ENCODE measurements at regions of chr6 and their contacts with region 1.

Region 1: DNA sequence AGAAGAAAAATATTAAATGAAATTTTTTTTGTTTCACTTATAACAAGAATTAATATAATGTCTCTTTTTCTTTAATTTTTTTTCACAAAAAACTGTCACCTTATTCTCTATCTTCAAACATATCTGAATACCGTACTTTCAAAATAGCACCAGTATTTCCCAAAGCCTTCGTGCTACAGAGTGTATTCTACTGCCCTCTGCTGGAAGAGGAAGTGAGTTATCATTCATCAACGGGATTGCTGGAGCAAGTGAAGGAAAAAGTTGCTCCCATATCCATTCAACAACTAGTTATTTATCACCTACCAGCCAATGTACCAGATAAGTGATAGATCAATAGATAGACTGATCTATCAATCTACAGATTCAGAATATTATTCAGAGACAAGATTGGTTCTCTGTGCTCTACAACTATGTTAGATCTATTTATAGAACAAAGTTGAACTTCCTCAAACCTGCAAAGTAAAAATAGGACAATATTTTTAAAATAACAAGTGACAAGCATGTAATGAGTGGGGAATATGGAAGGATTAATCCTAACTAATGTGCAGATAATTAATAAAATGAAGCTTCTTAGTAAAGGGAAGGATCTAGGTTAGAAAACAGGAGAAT is 26.7 kb upstream of the TFAP2B start:
- DNase-seq: no peak
- ATAC-seq: peak; percentile 78
- H3K4me3 ChIP-seq: no peak overlapping the region
- H3K27ac ChIP-seq: no peak overlapping the region
- H3K4me1 ChIP-seq: no peaks in the 10 kb centered on the region
- H3K27me3 ChIP-seq: no peaks in the 10 kb centered on the region
- CTCF ChIP-seq: peak; percentile 63 to 80 (median 76)
- EP300 ChIP-seq: no peak
- POLR2A ChIP-seq: no peak
- RAD21 ChIP-seq: peak; percentile 72

Region 2: DNA sequence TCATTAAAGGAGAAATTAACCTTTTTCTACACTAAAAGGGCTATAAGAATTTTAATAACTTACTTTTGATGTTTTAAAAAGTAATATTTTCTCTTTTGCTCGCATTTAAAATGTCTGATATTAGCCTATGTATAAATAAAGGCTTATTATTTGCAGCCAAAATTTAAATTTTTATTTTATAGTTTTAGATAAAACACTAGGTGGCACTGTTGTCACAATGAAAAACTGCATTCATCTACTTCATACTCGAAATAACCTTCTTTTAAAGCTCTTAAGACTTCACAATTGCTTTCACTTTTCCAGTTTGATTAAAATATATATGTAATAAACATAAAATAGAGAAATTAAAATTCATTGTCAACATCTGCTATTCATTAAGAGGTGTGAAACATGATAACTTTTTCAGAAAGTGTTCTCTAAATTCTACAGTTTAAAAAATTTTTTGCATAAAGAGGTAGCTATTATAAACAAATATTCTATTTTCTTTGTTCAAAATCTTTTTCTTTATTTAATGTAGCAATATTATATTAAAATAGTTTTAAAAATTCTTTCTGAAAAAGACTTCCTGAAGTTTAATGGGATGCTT is 663.5 kb before region 1 on chr6:
- CTCF ChIA-PET with region 1: no interaction called
- POLR2A ChIA-PET with region 1: no interaction called
- RAD21 ChIA-PET with region 1: no interaction called
- SMC1A ChIA-PET with region 1: no interaction called
- in situ Hi-C with region 1: loop called (anchors 10 kb)
- intact Hi-C with region 1: loop called (anchors 5 kb)
- DNase-seq: no peak
- ATAC-seq: no peak
- H3K4me3 ChIP-seq: no peak overlapping the region
- H3K27ac ChIP-seq: no peak overlapping the region
- H3K4me1 ChIP-seq: no peaks in the 10 kb centered on the region
- H3K27me3 ChIP-seq: no peaks in the 10 kb centered on the region
- CTCF ChIP-seq: peak in 2 of 3 experiments; percentile 22 to 35; a peak in 2 of 6 replicates
- EP300 ChIP-seq: no peak
- POLR2A ChIP-seq: no peak
- RAD21 ChIP-seq: peak; percentile 47

Region 3: GRCh38 chr6:50135968-50136367 is 656.0 kb before region 1 on chr6:
- CTCF ChIA-PET with region 1: no interaction called
- POLR2A ChIA-PET with region 1: no interaction called
- RAD21 ChIA-PET with region 1: no interaction called
- SMC1A ChIA-PET with region 1: no interaction called
- in situ Hi-C with region 1: loop called (anchors 10 kb)
- intact Hi-C with region 1: no loop called
- DNase-seq: no peak
- ATAC-seq: no peak
- H3K4me3 ChIP-seq: no peak overlapping the region
- H3K27ac ChIP-seq: no peak overlapping the region
- H3K4me1 ChIP-seq: no peaks in the 10 kb centered on the region
- H3K27me3 ChIP-seq: no peaks in the 10 kb centered on the region
- CTCF ChIP-seq: no peak
- EP300 ChIP-seq: no peak
- POLR2A ChIP-seq: no peak
- RAD21 ChIP-seq: no peak

Region 4: GRCh38 chr6:50655848-50656453 is 136.1 kb before region 1 on chr6:
- CTCF ChIA-PET with region 1: interaction called, 4 read pairs
- POLR2A ChIA-PET with region 1: no interaction called
- RAD21 ChIA-PET with region 1: no interaction called
- SMC1A ChIA-PET with region 1: interaction called, 4 read pairs
- in situ Hi-C with region 1: no loop called
- intact Hi-C with region 1: loop called (anchors 1 kb)
- DNase-seq: no peak
- ATAC-seq: peak; percentile 48; the same call in 2 of the 3 replicates
- H3K4me3 ChIP-seq: no peak overlapping the region
- H3K27ac ChIP-seq: no peak overlapping the region
- H3K4me1 ChIP-seq: no peaks in the 10 kb centered on the region
- H3K27me3 ChIP-seq: no peaks in the 10 kb centered on the region
- CTCF ChIP-seq: peak; percentile 53 to 59 (median 56); a peak in 5 of 6 replicates
- EP300 ChIP-seq: no peak
- POLR2A ChIP-seq: no peak
- RAD21 ChIP-seq: peak; percentile 45

Region 5: GRCh38 chr6:50829898-50830439 is 38.0 kb after region 1 on chr6:
- CTCF ChIA-PET with region 1: no interaction called
- POLR2A ChIA-PET with region 1: no interaction called
- RAD21 ChIA-PET with region 1: no interaction called
- SMC1A ChIA-PET with region 1: no interaction called
- in situ Hi-C with region 1: no loop called
- intact Hi-C with region 1: no loop called
- DNase-seq: no peak
- ATAC-seq: no peak
- H3K4me3 ChIP-seq: no peak overlapping the region
- H3K27ac ChIP-seq: no peak overlapping the region
- H3K4me1 ChIP-seq: no peaks in the 10 kb centered on the region
- H3K27me3 ChIP-seq: peaks cover 5 to 10% of the 10 kb centered on the region in 2 experiments; a peak in 2 of 4 replicates
- CTCF ChIP-seq: no peak
- EP300 ChIP-seq: no peak
- POLR2A ChIP-seq: no peak
- RAD21 ChIP-seq: no peak

Region 6: GRCh38 chr6:50913105-50913770 is 121.2 kb after region 1 on chr6:
- CTCF ChIA-PET with region 1: no interaction called
- POLR2A ChIA-PET with region 1: no interaction called
- RAD21 ChIA-PET with region 1: no interaction called
- SMC1A ChIA-PET with region 1: no interaction called
- in situ Hi-C with region 1: no loop called
- intact Hi-C with region 1: no loop called
- DNase-seq: no peak
- ATAC-seq: no peak
- H3K4me3 ChIP-seq: no peak overlapping the region
- H3K27ac ChIP-seq: no peak overlapping the region
- H3K4me1 ChIP-seq: no peaks in the 10 kb centered on the region
- H3K27me3 ChIP-seq: no peaks in the 10 kb centered on the region
- CTCF ChIP-seq: no peak
- EP300 ChIP-seq: no peak
- POLR2A ChIP-seq: no peak
- RAD21 ChIP-seq: no peak

Measured in GM12878 (cell line).